Calu3 (cell line): ENCODE measurements at regions of chr11 and their contacts with region 1.

Region 1: GRCh38 chr11:67119585-67120391 is 725 bp downstream of the KDM2A start:
- DNase-seq: peak; percentile 43
- H3K4me3 Mint-ChIP-seq: peak overlapping the region; percentile 90
- H3K27ac Mint-ChIP-seq: peak overlapping the region; percentile 86
- H3K4me1 Mint-ChIP-seq: no peaks in the 10 kb centered on the region
- H3K27me3 Mint-ChIP-seq: no peaks in the 10 kb centered on the region
- CTCF ChIP-seq: no peak

Region 2: DNA sequence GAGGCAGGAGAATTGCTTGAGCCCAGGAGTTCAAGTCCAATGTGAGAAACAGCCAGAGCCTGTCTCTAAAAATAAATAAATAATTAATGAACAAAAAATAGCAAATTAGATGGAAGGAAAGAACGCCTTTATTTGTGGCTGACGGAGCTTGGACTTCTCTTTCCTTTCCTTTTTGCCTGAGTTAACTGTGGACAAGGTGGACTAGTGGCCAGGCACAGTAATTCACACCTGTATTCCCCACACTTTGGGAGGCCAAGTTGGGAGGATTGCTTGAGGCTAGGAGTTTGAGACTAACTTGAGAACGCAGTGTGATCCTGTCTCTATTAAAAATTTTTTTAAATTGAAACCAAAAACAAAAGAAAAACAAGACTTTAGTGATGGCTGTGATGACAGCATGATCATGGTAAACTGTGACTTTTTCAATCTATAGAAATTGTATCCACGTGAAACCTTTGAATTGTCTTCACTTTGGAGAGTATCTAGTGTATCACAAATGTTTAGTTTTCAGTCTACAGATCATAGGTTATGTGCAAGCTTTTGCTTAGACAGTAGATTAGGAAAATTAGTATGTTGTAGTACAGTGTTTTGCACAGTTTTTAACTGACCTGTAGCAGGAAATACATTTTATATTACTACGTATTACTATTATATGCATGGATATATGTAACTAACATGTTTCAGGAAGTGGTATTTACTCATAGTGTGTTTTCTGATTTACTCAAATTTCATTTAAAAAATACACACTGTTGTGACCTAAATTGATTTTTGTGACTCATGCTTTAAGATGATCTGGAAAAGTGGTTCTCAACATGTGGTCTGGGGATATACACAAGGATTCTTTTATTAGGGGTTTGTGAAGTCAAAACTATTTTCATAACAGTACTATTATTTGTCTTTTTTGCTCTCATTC is 41.3 kb after region 1 on chr11:
- CTCF ChIA-PET with region 1: interaction called, 3 read pairs
- intact Hi-C with region 1: loop called (anchors 5 kb)
- DNase-seq: no peak
- H3K4me3 Mint-ChIP-seq: no peak overlapping the region
- H3K27ac Mint-ChIP-seq: no peak overlapping the region
- H3K4me1 Mint-ChIP-seq: no peaks in the 10 kb centered on the region
- H3K27me3 Mint-ChIP-seq: no peaks in the 10 kb centered on the region
- CTCF ChIP-seq: no peak

Region 3: GRCh38 chr11:67239783-67240575 is 120.2 kb after region 1 on chr11:
- CTCF ChIA-PET with region 1: interaction called, 4 read pairs
- intact Hi-C with region 1: loop called (anchors 10 kb)
- DNase-seq: peak; percentile 98
- H3K4me3 Mint-ChIP-seq: peak overlapping the region; percentile 95
- H3K27ac Mint-ChIP-seq: peak overlapping the region; percentile 93
- H3K4me1 Mint-ChIP-seq: peaks cover 34% of the 10 kb centered on the region
- H3K27me3 Mint-ChIP-seq: no peaks in the 10 kb centered on the region
- CTCF ChIP-seq: no peak